CD4-positive, alpha-beta memory T cell (primary cell): ENCODE measurements at regions of chr17 and their contacts with region 1.

Region 1: DNA sequence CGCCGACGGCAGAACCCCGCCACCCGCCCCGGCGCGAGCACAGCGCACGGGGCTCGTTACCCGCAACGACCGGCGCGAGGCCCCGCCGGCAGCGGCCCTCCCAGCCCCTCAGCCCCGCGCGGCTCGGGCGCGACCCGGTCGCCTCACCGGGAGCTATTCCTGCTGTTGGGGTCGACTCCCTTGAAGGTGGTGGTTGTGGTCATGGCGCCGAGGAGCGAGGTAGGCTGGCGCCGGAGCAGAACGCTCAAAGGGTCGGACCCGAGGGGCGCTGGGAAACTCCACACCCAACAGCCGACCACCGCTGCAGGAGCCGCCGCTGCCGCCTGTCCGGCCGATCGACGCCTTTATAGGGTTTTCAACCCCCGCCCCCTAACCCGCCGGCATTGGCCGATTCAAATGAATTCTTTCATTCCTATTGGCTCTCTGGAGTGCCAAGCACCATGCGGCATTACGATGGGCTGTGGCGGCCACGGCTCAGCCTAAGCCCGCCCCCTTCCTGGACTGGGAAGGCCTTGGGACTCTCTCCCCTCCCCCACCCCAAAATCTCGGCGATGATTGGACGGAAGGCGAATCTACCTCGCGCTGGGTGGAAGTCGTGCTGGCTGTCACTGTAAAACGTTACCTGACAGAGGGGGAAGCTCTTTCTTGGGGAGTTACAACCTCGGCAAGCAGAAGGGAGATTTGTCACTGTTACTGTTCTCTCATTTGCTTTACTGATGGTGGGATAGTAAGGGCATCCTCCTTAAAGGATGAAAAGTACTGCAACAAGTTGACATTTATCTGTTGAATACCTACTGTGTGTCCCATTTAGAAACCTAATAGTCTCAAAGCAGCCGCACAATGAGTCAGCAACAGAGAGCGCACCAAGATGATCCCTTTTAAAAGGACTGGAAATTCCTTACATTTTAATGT is at the start of gene JPT1:
- DNase-seq: peak; percentile 95 to 98 (median 97)
- H3K4me3 ChIP-seq: peak within 1 kb of the TSS; percentile 40 to 85
- H3K4me3 Mint-ChIP-seq: peak within 1 kb of the TSS; percentile 93 to 96 (median 94)
- H3K27ac ChIP-seq: peak within 1 kb of the TSS; percentile 63
- H3K27ac Mint-ChIP-seq: peak within 1 kb of the TSS; percentile 82 to 98 (median 94)
- H3K4me1 ChIP-seq: peaks cover 24% of the 10 kb centered on the region
- H3K4me1 Mint-ChIP-seq: peaks cover 24 to 32% (median 30%) of the 10 kb centered on the region in 4 donors
- H3K27me3 ChIP-seq: no peaks in the 10 kb centered on the region
- H3K27me3 Mint-ChIP-seq: no peaks in the 10 kb centered on the region
- total RNA-seq, gene JPT1: 37.8 to 38.9 TPM

Region 2: DNA sequence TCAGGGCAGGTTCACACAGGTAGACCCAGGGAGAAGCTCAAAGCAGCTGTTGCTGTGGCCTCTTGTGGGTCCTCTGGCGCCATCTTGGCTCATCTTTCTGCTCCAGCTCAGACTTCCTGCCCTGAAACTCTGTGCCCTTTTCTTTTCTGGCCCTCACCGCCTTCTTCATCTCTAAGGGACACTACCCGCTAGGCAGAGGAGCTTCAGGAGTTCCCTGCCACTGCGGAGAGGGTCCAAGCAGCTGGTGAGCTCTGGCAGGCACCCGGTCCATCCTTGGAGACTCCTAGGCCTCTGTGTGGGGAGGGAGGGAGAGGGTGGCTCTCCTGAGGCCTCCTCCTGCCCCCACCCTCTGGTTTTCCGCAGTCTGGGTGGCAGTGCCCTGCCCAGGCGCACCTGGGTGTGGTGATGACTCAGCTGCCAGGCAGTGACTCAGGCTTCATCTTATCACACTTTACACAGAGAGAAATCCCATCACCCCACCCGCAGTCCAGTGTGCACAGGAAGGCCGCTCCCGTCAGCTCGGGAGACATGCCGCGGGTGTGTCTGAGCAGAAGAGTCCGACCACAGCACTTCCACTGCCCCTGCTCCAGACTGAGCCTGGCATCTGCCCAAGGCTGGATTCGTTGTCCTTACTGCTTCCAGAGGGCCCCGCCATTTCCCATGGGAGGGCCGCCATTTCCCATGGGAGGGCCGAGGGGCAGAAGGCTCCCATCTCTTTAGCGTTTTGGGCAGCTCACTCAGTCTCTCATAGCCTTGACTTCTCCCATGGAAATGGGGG is 30.2 kb before region 1 on chr17:
- CTCF ChIA-PET with region 1: no interaction called
- POLR2A ChIA-PET with region 1: interaction called, 11 read pairs
- intact Hi-C with region 1: no loop called
- DNase-seq: peak in 4 of 5 donors; percentile 30 to 79 (median 40)
- H3K4me3 ChIP-seq: no peak overlapping the region
- H3K4me3 Mint-ChIP-seq: peak overlapping the region in 7 of 8 donors; percentile 4 to 75 (median 46)
- H3K27ac ChIP-seq: peak overlapping the region; percentile 21
- H3K27ac Mint-ChIP-seq: peak overlapping the region; percentile 67 to 93 (median 85)
- H3K4me1 ChIP-seq: peaks cover 30% of the 10 kb centered on the region
- H3K4me1 Mint-ChIP-seq: peaks cover 24 to 40% (median 30%) of the 10 kb centered on the region in 4 donors
- H3K27me3 ChIP-seq: no peaks in the 10 kb centered on the region
- H3K27me3 Mint-ChIP-seq: no peaks in the 10 kb centered on the region

Region 3: DNA sequence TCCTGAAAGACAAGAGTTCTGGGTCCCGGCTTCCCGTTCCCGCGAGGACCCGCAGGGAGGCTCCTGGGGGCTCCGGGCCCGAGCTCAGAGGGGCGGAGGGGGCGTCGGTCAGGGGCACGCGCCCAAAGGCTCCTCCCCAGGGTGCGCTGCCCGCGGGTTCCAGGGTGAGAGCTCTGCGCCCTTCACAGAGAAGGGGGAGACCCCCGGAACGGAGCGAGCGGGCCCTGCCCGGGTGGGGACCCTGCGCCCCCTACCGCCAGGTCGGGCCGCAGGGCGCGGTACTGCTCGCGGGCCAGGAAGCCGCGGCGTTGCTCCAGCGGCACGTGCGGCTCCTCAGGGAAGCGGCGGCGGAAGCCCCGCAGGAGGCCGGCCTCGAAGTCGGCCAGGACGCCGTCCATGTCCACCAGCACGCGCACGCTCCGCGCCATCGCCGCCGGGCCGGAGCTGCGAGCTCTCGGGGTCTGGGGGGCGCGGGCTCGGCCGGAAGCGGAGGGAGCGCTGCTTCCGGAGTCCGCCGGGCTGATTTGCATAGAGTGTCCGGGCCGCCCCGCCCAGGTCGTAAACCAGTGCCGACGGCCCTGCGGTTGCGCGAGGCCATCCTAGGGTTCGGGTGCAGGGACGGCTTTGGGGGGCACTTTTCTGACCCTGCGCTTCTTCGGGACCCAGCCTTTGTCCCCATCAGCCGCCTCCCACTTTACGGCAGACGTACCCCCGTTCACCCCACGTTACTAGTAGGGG is 23.0 kb before region 1 on chr17 and contains the start of gene NT5C:
- CTCF ChIA-PET with region 1: interaction called, 9 read pairs
- POLR2A ChIA-PET with region 1: interaction called, 13 read pairs
- intact Hi-C with region 1: loop called (anchors 2 kb)
- DNase-seq: peak in 4 of 5 donors; percentile 38 to 60 (median 49)
- H3K4me3 ChIP-seq: peak within 1 kb of the TSS; percentile 61 to 74
- H3K4me3 Mint-ChIP-seq: peak within 1 kb of the TSS; percentile 87 to 91 (median 90)
- H3K27ac ChIP-seq: peak within 1 kb of the TSS; percentile 80
- H3K27ac Mint-ChIP-seq: peak within 1 kb of the TSS; percentile 81 to 92 (median 88)
- H3K4me1 ChIP-seq: peaks cover 16% of the 10 kb centered on the region
- H3K4me1 Mint-ChIP-seq: peaks cover 8 to 19% (median 11%) of the 10 kb centered on the region in 4 donors
- H3K27me3 ChIP-seq: no peaks in the 10 kb centered on the region
- H3K27me3 Mint-ChIP-seq: no peaks in the 10 kb centered on the region
- total RNA-seq, gene NT5C: 40.1 to 46.6 TPM

Region 4: DNA sequence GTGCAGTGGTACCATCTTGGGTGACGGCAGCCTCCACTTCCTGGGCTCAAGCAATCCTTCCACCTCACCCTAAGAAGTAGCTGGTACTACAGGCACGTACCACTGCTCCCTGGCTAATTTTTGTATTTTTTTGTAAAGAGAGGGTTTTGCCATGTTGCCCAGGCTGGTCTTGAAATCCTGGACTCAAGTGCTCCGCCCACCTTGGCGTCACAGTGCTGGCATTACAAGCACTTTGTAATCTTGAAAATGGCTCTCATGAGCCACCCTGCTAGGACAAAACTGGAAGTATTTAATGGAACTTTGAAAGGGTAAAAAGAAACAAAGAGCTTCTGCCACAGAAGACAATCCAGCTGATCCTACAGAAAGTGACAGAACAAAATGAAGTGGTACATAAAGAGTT is 19.1 kb after region 1 on chr17:
- CTCF ChIA-PET with region 1: interaction called, 20 read pairs
- POLR2A ChIA-PET with region 1: interaction called, 8 read pairs
- intact Hi-C with region 1: loop called (anchors 2 kb)
- DNase-seq: no peak
- H3K4me3 ChIP-seq: no peak overlapping the region
- H3K4me3 Mint-ChIP-seq: no peak overlapping the region
- H3K27ac ChIP-seq: no peak overlapping the region
- H3K27ac Mint-ChIP-seq: peak overlapping the region in 4 of 7 donors; percentile 29 to 75 (median 38)
- H3K4me1 ChIP-seq: peaks cover 9% of the 10 kb centered on the region
- H3K4me1 Mint-ChIP-seq: peaks cover 7 to 26% (median 11%) of the 10 kb centered on the region in 4 donors
- H3K27me3 ChIP-seq: no peaks in the 10 kb centered on the region
- H3K27me3 Mint-ChIP-seq: no peaks in the 10 kb centered on the region

Region 5: DNA sequence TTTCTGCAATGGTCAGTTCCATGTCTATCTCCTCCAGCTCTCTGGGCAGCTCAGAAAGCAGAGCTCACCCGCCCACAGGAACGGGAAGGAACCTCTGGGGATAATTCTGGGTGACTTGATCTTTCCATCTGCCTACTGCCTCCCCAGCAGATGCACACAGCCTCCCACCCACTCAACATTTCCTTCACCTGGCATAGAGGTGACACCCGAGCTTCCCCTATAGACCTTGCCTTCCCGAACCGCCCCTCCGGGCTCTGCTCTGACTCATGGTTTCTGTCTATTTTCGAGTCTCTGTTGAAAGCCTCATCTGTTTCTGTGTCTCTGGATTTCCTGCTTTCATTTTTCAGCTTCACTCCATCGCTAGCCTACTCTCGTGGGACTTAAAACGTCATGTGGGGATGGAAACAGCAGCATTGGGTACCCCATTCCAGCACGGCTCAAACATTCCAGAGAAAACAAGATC is 95.6 kb after region 1 on chr17:
- CTCF ChIA-PET with region 1: no interaction called
- POLR2A ChIA-PET with region 1: no interaction called
- intact Hi-C with region 1: no loop called
- DNase-seq: peak in 4 of 5 donors; percentile 43 to 91 (median 50)
- H3K4me3 ChIP-seq: peak overlapping the region in 1 of 2 donors; percentile 35
- H3K4me3 Mint-ChIP-seq: peak overlapping the region; percentile 78 to 90 (median 84)
- H3K27ac ChIP-seq: peak overlapping the region; percentile 51
- H3K27ac Mint-ChIP-seq: peak overlapping the region; percentile 90 to 99 (median 95)
- H3K4me1 ChIP-seq: peaks cover 40% of the 10 kb centered on the region
- H3K4me1 Mint-ChIP-seq: peaks cover 24 to 64% (median 48%) of the 10 kb centered on the region in 4 donors
- H3K27me3 ChIP-seq: no peaks in the 10 kb centered on the region
- H3K27me3 Mint-ChIP-seq: no peaks in the 10 kb centered on the region

Region 6: DNA sequence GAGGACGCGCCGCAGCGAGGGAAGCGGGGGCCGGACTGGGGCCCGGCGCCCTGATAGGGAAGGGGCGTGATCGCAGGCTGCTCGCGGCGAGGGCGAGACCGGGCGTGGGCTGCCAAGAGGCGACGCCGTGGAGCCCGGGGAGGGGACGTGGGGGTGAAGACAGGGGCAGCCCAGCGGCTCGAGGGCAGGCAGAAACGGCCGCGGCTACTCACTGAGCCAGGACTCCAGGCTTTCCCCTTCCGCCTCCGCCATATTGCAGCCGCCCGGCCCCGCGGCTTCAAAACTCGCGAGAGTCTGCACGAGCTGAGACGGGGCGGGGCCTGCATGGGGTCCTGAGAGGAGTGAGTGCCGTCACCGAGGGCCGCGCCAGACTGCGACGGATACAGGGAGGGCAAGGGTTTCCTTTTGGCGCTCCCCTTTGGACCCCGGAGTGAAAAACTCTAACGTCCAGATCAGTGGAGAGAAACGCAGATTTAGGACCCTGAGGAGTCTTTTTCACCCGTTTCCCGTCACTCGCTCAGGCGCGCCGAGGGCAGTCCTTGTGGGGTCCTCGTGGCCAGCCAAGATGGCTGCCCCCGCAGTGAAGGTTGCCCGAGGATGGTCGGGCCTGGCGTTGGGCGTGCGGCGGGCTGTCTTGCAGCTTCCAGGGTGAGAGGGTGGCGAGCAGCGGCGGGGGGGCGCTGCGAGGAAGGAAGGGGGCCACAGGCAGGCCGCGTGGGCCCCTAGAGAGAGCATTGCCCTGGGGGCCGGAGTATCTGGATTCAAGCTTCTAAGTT is 107.1 kb after region 1 on chr17 and contains the starts of genes GGA3 and MRPS7:
- CTCF ChIA-PET with region 1: no interaction called
- POLR2A ChIA-PET with region 1: no interaction called
- intact Hi-C with region 1: loop called (anchors 1 kb)
- DNase-seq: peak; percentile 95 to 99 (median 97)
- H3K4me3 ChIP-seq: peak within 1 kb of the TSS; percentile 77 to 99
- H3K4me3 Mint-ChIP-seq: peak within 1 kb of the TSS; percentile 93 to 99 (median 97)
- H3K27ac ChIP-seq: peak within 1 kb of the TSS; percentile 96
- H3K27ac Mint-ChIP-seq: peak within 1 kb of the TSS; percentile 100
- H3K4me1 ChIP-seq: peaks cover 35% of the 10 kb centered on the region
- H3K4me1 Mint-ChIP-seq: peaks cover 32 to 65% (median 48%) of the 10 kb centered on the region in 4 donors
- H3K27me3 ChIP-seq: no peaks in the 10 kb centered on the region
- H3K27me3 Mint-ChIP-seq: no peaks in the 10 kb centered on the region
- total RNA-seq, gene GGA3: 121 to 122 TPM
- total RNA-seq, gene MRPS7: 34.1 to 36.3 TPM